Activated CD8-positive, alpha-beta T cell treated with anti-CD3 and anti-CD28 coated beads for 36 hours (primary cell): ENCODE measurements at regions of chr12 and their contacts with region 1.

Region 1: DNA sequence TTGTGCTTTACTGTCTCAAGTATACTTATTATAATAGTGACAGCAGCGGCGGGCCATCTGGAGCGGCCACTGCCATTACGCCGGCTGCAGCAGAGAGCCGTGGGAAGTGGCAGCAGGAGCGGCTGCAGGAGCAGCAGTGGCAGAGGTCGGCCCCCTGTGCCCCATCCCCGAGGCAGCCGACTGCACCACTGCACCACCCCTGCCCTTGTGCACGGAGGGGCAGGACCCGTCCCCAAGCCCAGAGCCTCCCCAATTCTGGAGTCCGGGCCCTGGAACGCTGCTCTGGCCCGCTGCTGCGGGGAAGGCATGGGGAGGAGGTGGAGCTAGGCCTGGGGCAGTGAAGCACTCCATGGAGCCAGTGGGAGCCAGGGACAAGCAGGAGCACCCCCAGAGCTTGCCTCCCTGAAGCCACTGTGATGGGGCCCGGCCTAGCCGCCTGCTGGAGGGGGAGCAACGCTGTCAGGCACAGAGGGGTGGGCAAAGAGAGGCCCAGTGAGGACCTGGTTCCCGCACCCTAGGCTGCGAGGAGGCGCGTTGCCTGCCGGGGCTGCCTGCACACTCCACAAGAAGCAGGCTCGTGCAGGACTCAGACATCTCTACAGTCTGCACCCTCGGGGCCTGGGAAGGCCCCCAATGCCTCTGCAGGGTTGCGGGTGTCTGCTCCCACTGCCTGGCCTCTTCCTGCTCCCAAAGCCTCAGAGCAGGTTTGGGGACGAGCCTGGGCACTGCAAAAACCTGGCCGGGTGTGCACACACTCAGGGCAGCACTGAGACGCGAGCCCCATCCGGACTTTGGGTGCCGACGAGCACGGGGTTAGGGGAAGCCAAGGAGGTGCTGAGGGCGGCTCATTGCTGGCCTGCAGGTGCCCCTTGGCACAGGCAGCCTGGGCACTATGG is 74.2 kb upstream of the RASSF8 start:
- DNase-seq: no peak
- ATAC-seq: no peak
- H3K4me3 Mint-ChIP-seq: no peak overlapping the region
- H3K27ac Mint-ChIP-seq: no peak overlapping the region
- H3K4me1 Mint-ChIP-seq: no peaks in the 10 kb centered on the region
- H3K27me3 Mint-ChIP-seq: no peaks in the 10 kb centered on the region
- CTCF ChIP-seq: no peak

Region 2: GRCh38 chr12:25670076-25671055 is 213.9 kb before region 1 on chr12:
- CTCF ChIA-PET with region 1: no interaction called
- POLR2A ChIA-PET with region 1: no interaction called
- intact Hi-C with region 1: no loop called
- DNase-seq: no peak
- ATAC-seq: no peak
- H3K4me3 Mint-ChIP-seq: no peak overlapping the region
- H3K27ac Mint-ChIP-seq: no peak overlapping the region
- H3K4me1 Mint-ChIP-seq: no peaks in the 10 kb centered on the region
- H3K27me3 Mint-ChIP-seq: no peaks in the 10 kb centered on the region
- CTCF ChIP-seq: no peak

Region 3: DNA sequence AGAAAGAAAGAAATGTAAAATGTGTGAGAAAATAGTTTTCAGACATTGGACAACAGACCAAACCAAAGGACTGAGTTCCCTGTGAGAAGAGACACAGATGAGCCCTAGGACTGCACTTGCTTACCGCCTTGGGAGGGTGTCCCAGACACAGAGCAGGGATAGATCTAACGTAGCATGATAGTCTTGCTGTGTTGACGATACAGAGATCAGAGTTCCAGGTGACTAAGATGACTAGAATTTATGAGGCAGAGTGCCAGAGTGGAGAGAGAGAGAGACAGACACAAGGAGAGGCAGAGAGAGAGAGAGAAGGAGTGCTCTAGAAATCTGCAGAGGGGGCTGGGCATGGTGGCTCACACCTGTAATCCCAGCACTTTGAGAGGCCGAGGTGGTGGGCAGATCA is 183.0 kb before region 1 on chr12:
- CTCF ChIA-PET with region 1: no interaction called
- POLR2A ChIA-PET with region 1: no interaction called
- intact Hi-C with region 1: no loop called
- DNase-seq: no peak
- ATAC-seq: no peak
- H3K4me3 Mint-ChIP-seq: no peak overlapping the region
- H3K27ac Mint-ChIP-seq: no peak overlapping the region
- H3K4me1 Mint-ChIP-seq: no peaks in the 10 kb centered on the region
- H3K27me3 Mint-ChIP-seq: no peaks in the 10 kb centered on the region
- CTCF ChIP-seq: no peak

Region 4: GRCh38 chr12:25789541-25789944 is 94.7 kb before region 1 on chr12:
- CTCF ChIA-PET with region 1: no interaction called
- POLR2A ChIA-PET with region 1: no interaction called
- intact Hi-C with region 1: no loop called
- DNase-seq: no peak
- ATAC-seq: no peak
- H3K4me3 Mint-ChIP-seq: no peak overlapping the region
- H3K27ac Mint-ChIP-seq: no peak overlapping the region
- H3K4me1 Mint-ChIP-seq: no peaks in the 10 kb centered on the region
- H3K27me3 Mint-ChIP-seq: no peaks in the 10 kb centered on the region
- CTCF ChIP-seq: no peak

Region 5: GRCh38 chr12:26017484-26018206 is 133.4 kb after region 1 on chr12:
- CTCF ChIA-PET with region 1: no interaction called
- POLR2A ChIA-PET with region 1: no interaction called
- intact Hi-C with region 1: loop called (anchors 10 kb)
- DNase-seq: peak; percentile 30
- ATAC-seq: no peak
- H3K4me3 Mint-ChIP-seq: no peak overlapping the region
- H3K27ac Mint-ChIP-seq: no peak overlapping the region
- H3K4me1 Mint-ChIP-seq: no peaks in the 10 kb centered on the region
- H3K27me3 Mint-ChIP-seq: peaks cover 5% of the 10 kb centered on the region
- CTCF ChIP-seq: peak; percentile 43